Activated CD4-positive, alpha-beta T cell treated with anti-CD3 and anti-CD28 coated beads for 36 hours (primary cell): ENCODE measurements at regions of chr11 and their contacts with region 1.

Region 1: DNA sequence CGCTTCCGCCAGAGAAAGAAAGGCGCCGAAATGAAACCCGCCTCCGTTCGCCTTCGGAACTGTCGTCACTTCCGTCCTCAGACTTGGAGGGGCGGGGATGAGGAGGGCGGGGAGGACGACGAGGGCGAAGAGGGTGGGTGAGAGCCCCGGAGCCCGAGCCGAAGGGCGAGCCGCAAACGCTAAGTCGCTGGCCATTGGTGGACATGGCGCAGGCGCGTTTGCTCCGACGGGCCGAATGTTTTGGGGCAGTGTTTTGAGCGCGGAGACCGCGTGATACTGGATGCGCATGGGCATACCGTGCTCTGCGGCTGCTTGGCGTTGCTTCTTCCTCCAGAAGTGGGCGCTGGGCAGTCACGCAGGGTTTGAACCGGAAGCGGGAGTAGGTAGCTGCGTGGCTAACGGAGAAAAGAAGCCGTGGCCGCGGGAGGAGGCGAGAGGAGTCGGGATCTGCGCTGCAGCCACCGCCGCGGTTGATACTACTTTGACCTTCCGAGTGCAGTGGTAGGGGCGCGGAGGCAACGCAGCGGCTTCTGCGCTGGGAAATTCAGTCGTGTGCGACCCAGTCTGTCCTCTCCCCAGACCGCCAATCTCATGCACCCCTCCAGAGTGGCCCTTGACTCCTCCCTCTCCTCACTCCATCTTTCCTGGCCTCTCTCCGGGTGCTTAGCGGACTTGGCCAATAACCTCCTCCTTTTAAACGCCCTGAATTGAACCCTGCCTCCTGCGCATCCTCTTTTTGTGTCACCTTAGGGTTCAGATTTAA is at the start of gene ATM:
- DNase-seq: peak; percentile 99
- ATAC-seq: peak; percentile 77
- H3K4me3 Mint-ChIP-seq: no peak within 1 kb of the TSS
- H3K27ac Mint-ChIP-seq: no peak within 1 kb of the TSS
- H3K4me1 Mint-ChIP-seq: peaks cover 50% of the 10 kb centered on the region
- H3K27me3 Mint-ChIP-seq: no peaks in the 10 kb centered on the region
- total RNA-seq, gene ATM: 32.8 to 36.1 TPM

Region 2: DNA sequence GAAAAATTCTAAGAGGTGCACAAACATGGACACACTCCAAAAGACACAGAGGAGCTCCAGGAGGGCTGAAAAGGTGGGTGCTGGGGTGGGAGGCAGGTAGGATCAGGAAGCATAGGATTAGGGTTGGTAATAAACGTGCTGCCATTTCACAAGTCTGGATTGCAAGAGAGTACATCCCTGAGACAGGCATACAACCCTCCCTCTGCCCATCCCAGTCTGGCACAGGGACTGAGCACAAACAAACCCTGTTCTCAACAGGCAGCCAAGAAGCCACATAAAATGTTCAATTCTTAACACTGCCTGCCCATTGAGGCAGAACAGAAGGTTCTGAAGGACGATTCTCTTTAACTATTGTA is 382.8 kb before region 1 on chr11:
- CTCF ChIA-PET with region 1: no interaction called
- POLR2A ChIA-PET with region 1: no interaction called
- intact Hi-C with region 1: loop called (anchors 5 to 10 kb)
- DNase-seq: no peak
- ATAC-seq: peak; percentile 4
- H3K4me3 Mint-ChIP-seq: peak overlapping the region; percentile 23
- H3K27ac Mint-ChIP-seq: peak overlapping the region; percentile 96
- H3K4me1 Mint-ChIP-seq: peaks cover 71% of the 10 kb centered on the region
- H3K27me3 Mint-ChIP-seq: no peaks in the 10 kb centered on the region

Region 3: GRCh38 chr11:108121274-108122155 is 101.4 kb before region 1 on chr11 and contains the start of gene ACAT1:
- CTCF ChIA-PET with region 1: interaction called, 3 read pairs
- POLR2A ChIA-PET with region 1: no interaction called
- intact Hi-C with region 1: loop called (anchors 1 kb)
- DNase-seq: peak; percentile 98
- ATAC-seq: peak; percentile 96
- H3K4me3 Mint-ChIP-seq: peak within 1 kb of the TSS; percentile 87
- H3K27ac Mint-ChIP-seq: peak within 1 kb of the TSS; percentile 85
- H3K4me1 Mint-ChIP-seq: peaks cover 40% of the 10 kb centered on the region
- H3K27me3 Mint-ChIP-seq: no peaks in the 10 kb centered on the region
- total RNA-seq, gene ACAT1: 59.0 to 67.0 TPM

Region 4: GRCh38 chr11:108237058-108237481 is 14.2 kb after region 1 on chr11:
- CTCF ChIA-PET with region 1: interaction called, 91 read pairs
- POLR2A ChIA-PET with region 1: interaction called, 22 read pairs
- intact Hi-C with region 1: loop called (anchors 1 kb)
- DNase-seq: no peak
- ATAC-seq: peak; percentile 47
- H3K4me3 Mint-ChIP-seq: peak overlapping the region; percentile 57
- H3K27ac Mint-ChIP-seq: peak overlapping the region; percentile 83
- H3K4me1 Mint-ChIP-seq: peaks cover 77% of the 10 kb centered on the region
- H3K27me3 Mint-ChIP-seq: no peaks in the 10 kb centered on the region

Region 5: DNA sequence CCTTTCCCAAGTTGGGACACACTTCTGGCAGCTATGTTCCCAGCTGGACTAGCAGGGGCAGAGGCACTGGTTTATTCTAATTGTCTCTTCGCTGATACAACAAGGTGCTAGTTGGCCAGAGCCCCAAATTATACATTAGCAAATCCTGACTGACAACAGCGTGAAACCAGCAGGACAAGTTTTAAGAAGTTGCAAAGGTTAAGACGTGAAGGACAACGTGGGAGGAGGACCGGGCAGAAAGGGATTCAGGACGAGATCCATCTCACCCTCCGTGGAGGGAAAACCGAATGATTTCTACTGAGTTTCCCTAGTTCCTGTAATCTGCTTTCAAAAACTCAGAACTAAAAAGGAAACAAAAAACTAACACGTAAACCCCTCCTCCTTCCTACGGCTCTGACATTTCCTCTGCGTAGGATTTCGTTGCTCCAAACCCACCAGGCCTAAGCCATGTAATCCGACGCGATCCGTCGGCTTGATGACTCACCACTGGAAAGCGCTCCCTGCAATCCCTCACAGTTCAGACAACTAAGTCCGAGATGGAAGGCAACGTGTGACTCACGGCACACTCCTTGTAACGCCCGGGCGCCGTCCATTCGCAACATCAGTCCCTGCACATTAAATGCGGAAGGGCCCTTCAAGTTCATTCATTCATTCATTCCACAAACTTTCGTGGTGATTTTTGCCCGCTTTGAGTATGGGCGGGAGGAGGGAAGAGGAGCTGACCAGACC is 274.6 kb after region 1 on chr11:
- CTCF ChIA-PET with region 1: no interaction called
- POLR2A ChIA-PET with region 1: interaction called, 3 read pairs
- intact Hi-C with region 1: loop called (anchors 1 to 10 kb)
- DNase-seq: peak; percentile 85
- ATAC-seq: peak; percentile 91
- H3K4me3 Mint-ChIP-seq: peak overlapping the region; percentile 81
- H3K27ac Mint-ChIP-seq: peak overlapping the region; percentile 91
- H3K4me1 Mint-ChIP-seq: peaks cover 17% of the 10 kb centered on the region
- H3K27me3 Mint-ChIP-seq: no peaks in the 10 kb centered on the region

Region 6: GRCh38 chr11:108647701-108648527 is 425.0 kb after region 1 on chr11:
- CTCF ChIA-PET with region 1: no interaction called
- POLR2A ChIA-PET with region 1: interaction called, 3 read pairs
- intact Hi-C with region 1: loop called (anchors 1 to 2 kb)
- DNase-seq: peak; percentile 81
- ATAC-seq: peak; percentile 99
- H3K4me3 Mint-ChIP-seq: no peak overlapping the region
- H3K27ac Mint-ChIP-seq: no peak overlapping the region
- H3K4me1 Mint-ChIP-seq: no peaks in the 10 kb centered on the region
- H3K27me3 Mint-ChIP-seq: no peaks in the 10 kb centered on the region